Naive thymus-derived CD4-positive, alpha-beta T cell (primary cell): ENCODE measurements at regions of chr6 and their contacts with region 1.

Region 1: DNA sequence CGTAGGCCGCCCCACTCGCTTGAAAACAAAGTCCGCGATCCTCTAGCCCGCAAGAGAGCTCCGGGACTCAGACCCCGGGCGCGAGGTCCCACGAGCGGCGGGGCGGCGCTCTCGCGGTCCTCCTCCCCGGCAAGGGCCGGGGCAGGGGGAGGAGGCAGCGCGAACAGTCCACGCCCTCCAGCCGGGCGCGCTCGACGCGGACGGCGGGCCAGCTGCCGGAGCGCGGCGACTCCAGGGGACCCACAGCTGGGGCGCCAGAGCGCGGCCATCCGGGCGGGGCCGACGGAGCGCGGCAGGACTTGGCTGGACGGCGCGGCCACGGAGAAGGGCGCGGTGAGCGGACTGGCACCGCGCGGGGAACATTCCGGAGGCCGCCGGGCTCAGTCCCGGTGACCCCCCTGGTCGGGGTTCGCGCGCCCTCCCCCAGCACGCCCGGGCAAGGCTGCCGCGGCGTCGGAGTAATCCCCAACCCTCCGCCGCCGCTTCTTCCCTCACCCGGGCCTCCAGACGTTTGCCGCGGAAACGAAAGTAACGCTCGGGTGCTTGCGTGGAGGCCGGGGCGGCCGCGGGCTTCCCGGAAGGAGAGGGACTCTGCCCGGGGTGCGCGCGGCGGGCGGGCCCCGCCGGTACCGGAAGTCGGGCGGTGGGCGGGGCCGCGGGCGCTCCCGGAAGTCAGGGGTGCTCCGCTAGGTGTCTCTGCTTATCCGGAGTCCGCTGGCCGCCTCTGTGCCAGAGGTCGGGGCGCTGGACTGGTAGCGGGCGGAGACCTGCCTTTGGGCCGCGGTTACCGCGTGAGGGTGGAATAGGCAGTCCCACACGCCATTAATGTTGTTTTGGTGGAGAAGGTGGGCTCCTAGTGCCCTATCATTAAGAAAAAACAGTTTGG is at the start of gene RIPK1:
- DNase-seq: peak; percentile 92 to 98 (median 95)
- ATAC-seq: peak; percentile 88
- H3K4me3 ChIP-seq: peak within 1 kb of the TSS; percentile 86
- H3K4me3 Mint-ChIP-seq: peak within 1 kb of the TSS; percentile 91 to 99 (median 96)
- H3K27ac ChIP-seq: peak within 1 kb of the TSS; percentile 99
- H3K27ac Mint-ChIP-seq: peak within 1 kb of the TSS; percentile 92 to 99 (median 98)
- H3K4me1 ChIP-seq: peaks cover 23% of the 10 kb centered on the region in 2 donors
- H3K4me1 Mint-ChIP-seq: peaks cover 41 to 83% (median 69%) of the 10 kb centered on the region in 7 donors
- H3K27me3 ChIP-seq: no peaks in the 10 kb centered on the region
- H3K27me3 Mint-ChIP-seq: no peaks in the 10 kb centered on the region
- total RNA-seq, gene RIPK1: 20.3 to 34.8 (median 32.4) TPM

Region 2: DNA sequence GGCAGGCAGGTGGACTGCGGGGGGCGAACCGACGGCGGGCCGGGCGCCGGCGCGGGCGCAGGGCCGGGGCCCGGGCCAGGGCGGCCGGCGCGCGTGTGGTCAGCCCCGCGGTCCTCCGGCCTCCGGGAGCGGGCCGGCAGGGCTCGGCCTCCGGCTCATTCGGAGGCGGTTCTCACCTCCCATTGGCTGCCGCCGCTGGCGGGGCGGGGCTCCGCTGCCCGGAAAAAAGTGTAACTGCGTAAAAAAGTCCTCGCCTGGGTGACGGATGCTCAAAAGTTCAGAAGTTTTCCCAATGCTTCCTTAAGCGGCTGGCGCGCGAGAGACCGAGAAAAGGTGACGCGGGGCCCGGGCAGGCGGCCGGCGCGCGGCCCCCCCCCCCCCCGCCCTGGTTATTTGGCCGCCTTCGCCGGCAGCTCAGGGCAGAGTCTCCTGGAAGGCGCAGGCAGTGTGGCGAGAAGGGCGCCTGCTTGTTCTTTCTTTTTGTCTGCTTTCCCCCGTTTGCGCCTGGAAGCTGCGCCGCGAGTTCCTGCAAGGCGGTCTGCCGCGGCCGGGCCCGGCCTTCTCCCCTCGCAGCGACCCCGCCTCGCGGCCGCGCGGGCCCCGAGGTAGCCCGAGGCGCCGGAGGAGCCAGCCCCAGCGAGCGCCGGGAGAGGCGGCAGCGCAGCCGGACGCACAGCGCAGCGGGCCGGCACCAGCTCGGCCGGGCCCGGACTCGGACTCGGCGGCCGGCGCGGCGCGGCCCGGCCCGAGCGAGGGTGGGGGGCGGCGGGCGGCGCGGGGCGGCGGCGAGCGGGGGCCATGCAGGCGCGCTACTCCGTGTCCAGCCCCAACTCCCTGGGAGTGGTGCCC is 1458.7 kb before region 1 on chr6 and contains the start of gene FOXC1:
- CTCF ChIA-PET with region 1: no interaction called
- POLR2A ChIA-PET with region 1: no interaction called
- intact Hi-C with region 1: loop called in 1 of 2 experiments (anchors 10 kb)
- DNase-seq: peak in 1 of 9 donors; percentile 61
- ATAC-seq: peak; percentile 54
- H3K4me3 ChIP-seq: peak within 1 kb of the TSS; percentile 26
- H3K4me3 Mint-ChIP-seq: peak within 1 kb of the TSS; percentile 75 to 88 (median 82)
- H3K27ac ChIP-seq: no peak within 1 kb of the TSS
- H3K27ac Mint-ChIP-seq: peak within 1 kb of the TSS in 1 of 9 donors; percentile 84
- H3K4me1 ChIP-seq: peaks cover 22 to 27% of the 10 kb centered on the region in 2 donors
- H3K4me1 Mint-ChIP-seq: peaks cover 35 to 65% (median 55%) of the 10 kb centered on the region in 7 donors
- H3K27me3 ChIP-seq: peaks cover 20 to 36% of the 10 kb centered on the region in 2 donors
- H3K27me3 Mint-ChIP-seq: peaks cover 55 to 67% (median 65%) of the 10 kb centered on the region in 5 donors
- total RNA-seq, gene FOXC1: not detected

Region 3: DNA sequence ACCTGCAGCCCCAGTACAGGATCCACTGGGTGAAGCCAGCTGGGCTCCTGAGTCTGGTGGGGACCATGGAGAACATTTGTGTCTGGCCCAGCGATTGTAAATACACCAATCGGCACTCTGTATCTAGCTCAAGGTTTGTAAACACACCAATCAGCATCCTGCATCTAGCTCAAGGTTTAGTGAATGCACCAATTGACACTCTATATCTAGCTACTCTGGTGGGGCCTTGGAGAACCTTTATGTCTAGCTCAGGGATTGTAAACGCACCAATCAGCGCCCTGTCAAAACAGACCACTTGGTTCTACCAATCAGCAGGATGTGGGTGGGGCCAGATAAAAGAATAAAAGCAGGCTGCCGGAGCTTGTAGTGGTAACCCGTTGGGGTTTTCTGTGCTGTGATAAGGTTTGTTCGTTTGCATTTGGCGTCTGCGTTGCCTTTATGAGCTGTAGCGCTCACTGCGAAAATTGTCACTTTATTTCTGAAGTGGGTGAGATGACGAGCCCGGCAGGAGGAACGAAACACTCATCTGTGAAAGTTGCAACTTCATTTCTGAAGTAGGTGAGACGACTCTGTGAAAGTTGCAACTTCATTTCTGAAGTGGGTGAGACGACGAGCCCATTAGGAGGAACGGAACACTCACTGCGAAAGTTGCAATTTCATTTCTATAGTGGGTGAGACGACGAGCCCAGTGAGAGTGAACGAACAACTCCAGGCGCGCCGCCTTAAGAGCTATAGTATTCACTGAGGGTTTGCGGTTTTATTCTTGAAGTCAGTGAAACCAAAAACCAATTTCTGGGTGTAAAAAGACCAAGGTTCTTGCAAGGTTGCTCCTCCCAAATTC is 128.3 kb before region 1 on chr6:
- CTCF ChIA-PET with region 1: no interaction called
- POLR2A ChIA-PET with region 1: interaction called, 8 read pairs
- intact Hi-C with region 1: loop called (anchors 1 to 5 kb)
- DNase-seq: peak in 8 of 9 donors; percentile 70 to 90 (median 82)
- ATAC-seq: peak; percentile 81
- H3K4me3 ChIP-seq: peak overlapping the region; percentile 72
- H3K4me3 Mint-ChIP-seq: peak overlapping the region; percentile 81 to 94 (median 88)
- H3K27ac ChIP-seq: peak overlapping the region; percentile 81
- H3K27ac Mint-ChIP-seq: peak overlapping the region; percentile 93 to 100 (median 97)
- H3K4me1 ChIP-seq: peaks cover 27 to 76% of the 10 kb centered on the region in 2 donors
- H3K4me1 Mint-ChIP-seq: peaks cover 33 to 88% (median 79%) of the 10 kb centered on the region in 7 donors
- H3K27me3 ChIP-seq: no peaks in the 10 kb centered on the region
- H3K27me3 Mint-ChIP-seq: peaks cover 0 to 22% (median 0%) of the 10 kb centered on the region in 5 donors

Region 4: DNA sequence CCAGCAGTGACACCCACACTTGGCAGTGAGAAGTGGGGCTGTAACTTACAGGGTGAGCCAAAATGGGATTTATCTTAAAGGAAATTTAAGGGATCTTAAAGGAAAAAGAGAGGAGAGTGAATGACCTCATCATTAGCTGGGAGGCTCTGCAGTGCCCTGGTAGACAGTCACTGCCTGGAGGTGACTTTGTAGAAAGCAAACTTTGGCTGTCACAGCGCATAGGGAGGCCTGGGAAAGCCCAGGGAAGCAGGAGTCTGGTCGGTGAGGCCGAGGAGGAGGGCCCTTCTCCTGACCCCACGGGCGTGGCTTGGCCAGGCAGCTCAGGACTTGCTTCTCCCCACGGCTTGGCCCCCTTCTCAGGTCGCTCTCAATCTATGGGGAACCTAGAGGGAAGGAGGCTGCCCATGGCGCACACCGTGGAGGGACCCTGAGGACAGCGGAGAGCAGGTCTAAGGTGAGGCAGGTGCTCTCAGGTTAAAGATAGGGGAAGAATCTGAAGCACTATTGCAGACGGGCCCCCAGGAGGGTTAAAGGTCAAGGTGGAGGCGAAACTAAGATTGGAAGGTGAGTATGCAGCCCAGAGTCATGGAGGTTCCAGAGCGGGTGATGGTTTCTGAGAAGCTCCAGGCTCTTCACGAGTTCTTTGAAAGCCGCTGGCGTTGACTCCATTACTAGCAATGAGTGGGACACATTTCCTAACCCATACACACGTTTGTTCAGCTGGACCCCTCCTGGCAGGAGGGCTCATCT is 15.9 kb before region 1 on chr6:
- CTCF ChIA-PET with region 1: interaction called, 4 read pairs
- POLR2A ChIA-PET with region 1: interaction called, 9 read pairs
- intact Hi-C with region 1: loop called in 1 of 2 experiments (anchors 1 kb)
- DNase-seq: no peak
- ATAC-seq: no peak
- H3K4me3 ChIP-seq: peak overlapping the region; percentile 64
- H3K4me3 Mint-ChIP-seq: peak overlapping the region; percentile 70 to 83 (median 76)
- H3K27ac ChIP-seq: no peak overlapping the region
- H3K27ac Mint-ChIP-seq: peak overlapping the region; percentile 52 to 84 (median 69)
- H3K4me1 ChIP-seq: peaks cover 5% of the 10 kb centered on the region in 2 donors
- H3K4me1 Mint-ChIP-seq: peaks cover 7 to 36% (median 17%) of the 10 kb centered on the region in 7 donors
- H3K27me3 ChIP-seq: no peaks in the 10 kb centered on the region
- H3K27me3 Mint-ChIP-seq: peaks cover 0 to 23% (median 0%) of the 10 kb centered on the region in 5 donors

Region 5: GRCh38 chr6:3157131-3157927 is 88.8 kb after region 1 on chr6 and contains the start of gene TUBB2A:
- CTCF ChIA-PET with region 1: interaction called, 4 read pairs
- POLR2A ChIA-PET with region 1: no interaction called
- intact Hi-C with region 1: loop called (anchors 1 to 2 kb)
- DNase-seq: peak; percentile 83 to 96 (median 90)
- ATAC-seq: peak; percentile 87
- H3K4me3 ChIP-seq: peak within 1 kb of the TSS; percentile 61
- H3K4me3 Mint-ChIP-seq: peak within 1 kb of the TSS; percentile 81 to 94 (median 92)
- H3K27ac ChIP-seq: peak within 1 kb of the TSS; percentile 86
- H3K27ac Mint-ChIP-seq: peak within 1 kb of the TSS; percentile 75 to 96 (median 93)
- H3K4me1 ChIP-seq: peaks cover 15 to 17% of the 10 kb centered on the region in 2 donors
- H3K4me1 Mint-ChIP-seq: peaks cover 4 to 37% (median 33%) of the 10 kb centered on the region in 7 donors
- H3K27me3 ChIP-seq: no peaks in the 10 kb centered on the region
- H3K27me3 Mint-ChIP-seq: peaks cover 0 to 52% (median 4%) of the 10 kb centered on the region in 5 donors
- total RNA-seq, gene TUBB2A: 2.2 to 39.6 (median 3.1) TPM

Region 6: DNA sequence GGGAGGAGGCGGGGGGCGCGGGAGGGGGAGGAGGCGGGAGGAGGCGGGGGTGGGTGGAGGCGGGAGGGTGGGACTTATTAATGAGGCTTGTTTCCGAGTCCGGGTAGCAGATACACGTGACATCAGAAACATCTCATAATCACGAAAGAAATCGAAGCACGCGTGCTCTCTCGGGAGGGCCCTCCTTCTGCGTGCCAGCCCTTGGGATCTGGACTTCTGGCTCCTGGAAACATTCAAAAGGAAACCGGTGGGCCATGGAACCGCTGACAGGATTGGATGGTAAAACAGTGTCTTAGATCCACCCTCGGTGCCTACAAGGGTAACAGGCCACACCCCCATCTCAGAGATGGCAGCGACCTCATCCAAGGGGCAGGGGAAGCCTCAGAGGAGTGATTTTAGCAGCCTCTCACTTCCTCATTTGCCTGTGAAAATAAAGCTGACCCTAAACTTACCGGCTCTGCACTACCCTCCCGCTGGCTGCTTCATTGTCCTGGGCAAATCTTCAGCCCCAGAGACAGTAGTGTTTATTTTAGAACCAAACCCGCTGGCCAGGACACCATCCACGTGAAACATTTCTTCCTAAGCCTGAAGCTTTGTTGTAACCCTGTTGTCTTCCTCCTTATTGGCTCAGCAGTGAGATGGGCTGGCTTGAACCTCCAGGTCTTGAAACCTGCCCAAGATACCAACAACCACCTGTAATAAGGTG is 287.6 kb after region 1 on chr6:
- CTCF ChIA-PET with region 1: no interaction called
- POLR2A ChIA-PET with region 1: no interaction called
- intact Hi-C with region 1: loop called in 1 of 2 experiments (anchors 1 kb)
- DNase-seq: peak in 8 of 9 donors; percentile 31 to 86 (median 78)
- ATAC-seq: peak; percentile 89
- H3K4me3 ChIP-seq: peak overlapping the region; percentile 65
- H3K4me3 Mint-ChIP-seq: peak overlapping the region; percentile 76 to 99 (median 88)
- H3K27ac ChIP-seq: peak overlapping the region; percentile 78
- H3K27ac Mint-ChIP-seq: peak overlapping the region in 8 of 9 donors; percentile 92 to 100 (median 98)
- H3K4me1 ChIP-seq: peaks cover 7 to 27% of the 10 kb centered on the region in 2 donors
- H3K4me1 Mint-ChIP-seq: peaks cover 14 to 79% (median 58%) of the 10 kb centered on the region in 7 donors
- H3K27me3 ChIP-seq: no peaks in the 10 kb centered on the region
- H3K27me3 Mint-ChIP-seq: peaks cover 0 to 43% (median 0%) of the 10 kb centered on the region in 5 donors

Region 7: GRCh38 chr6:4135665-4136353 is 1067.2 kb after region 1 on chr6:
- CTCF ChIA-PET with region 1: no interaction called
- POLR2A ChIA-PET with region 1: no interaction called
- intact Hi-C with region 1: loop called (anchors 1 to 10 kb)
- DNase-seq: peak; percentile 74 to 93 (median 86)
- ATAC-seq: peak; percentile 97
- H3K4me3 ChIP-seq: peak overlapping the region; percentile 67
- H3K4me3 Mint-ChIP-seq: peak overlapping the region; percentile 83 to 94 (median 87)
- H3K27ac ChIP-seq: peak overlapping the region; percentile 76
- H3K27ac Mint-ChIP-seq: peak overlapping the region; percentile 55 to 88 (median 84)
- H3K4me1 ChIP-seq: peaks cover 10 to 14% of the 10 kb centered on the region in 2 donors
- H3K4me1 Mint-ChIP-seq: peaks cover 20 to 52% (median 37%) of the 10 kb centered on the region in 7 donors
- H3K27me3 ChIP-seq: no peaks in the 10 kb centered on the region
- H3K27me3 Mint-ChIP-seq: no peaks in the 10 kb centered on the region